Transverse colon (tissue), 4 donors: ENCODE measurements at regions of chr22 and their contacts with region 1.

Region 1: GRCh38 chr22:37198258-37199102 is 10.4 kb upstream of the C1QTNF6 start:
- DNase-seq: peak; percentile 94
- H3K4me3 ChIP-seq: peak overlapping the region; percentile 47 to 83 (median 62)
- H3K27ac ChIP-seq: peak overlapping the region; percentile 94 to 100 (median 96)
- H3K4me1 ChIP-seq: peaks cover 21 to 40% (median 37%) of the 10 kb centered on the region in 4 donors
- H3K27me3 ChIP-seq: no peaks in the 10 kb centered on the region
- CTCF ChIP-seq: peak; percentile 77 to 94 (median 90)
- EP300 ChIP-seq: no peak
- POLR2A ChIP-seq: no peak

Region 2: DNA sequence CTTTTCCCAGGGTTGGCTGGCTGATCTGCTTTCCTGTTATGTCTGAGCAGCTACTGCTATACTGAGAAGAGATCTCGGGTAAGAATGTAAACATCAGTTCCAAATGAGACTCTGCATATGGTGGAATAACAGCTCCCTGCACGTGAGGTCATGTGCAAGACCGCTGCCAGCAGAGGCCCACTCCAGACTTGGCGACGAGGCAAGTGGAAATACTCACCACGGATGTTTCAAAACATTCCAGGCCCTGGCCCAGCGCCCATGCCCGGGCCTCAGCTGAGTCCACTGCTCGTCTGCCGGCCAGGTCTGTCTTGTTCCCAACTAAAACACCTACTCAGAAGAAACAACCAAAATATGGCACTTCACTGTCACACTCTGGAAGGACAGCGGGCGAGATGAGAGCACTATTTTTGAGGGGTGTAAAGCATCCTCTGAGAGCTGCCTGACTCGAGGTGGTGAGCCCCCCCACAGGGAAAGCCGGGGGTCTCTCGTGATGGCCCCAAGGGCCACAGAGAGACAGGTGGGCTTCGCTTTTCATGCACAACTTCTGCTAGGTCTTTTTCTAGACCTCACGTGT is 435.7 kb before region 1 on chr22:
- in situ Hi-C with region 1: no loop called
- intact Hi-C with region 1: loop called (anchors 10 kb)
- DNase-seq: peak; percentile 53
- H3K4me3 ChIP-seq: no peak overlapping the region
- H3K27ac ChIP-seq: peak overlapping the region in 3 of 4 donors; percentile 23 to 66 (median 44)
- H3K4me1 ChIP-seq: peaks cover 0 to 8% (median 2%) of the 10 kb centered on the region in 4 donors
- H3K27me3 ChIP-seq: no peaks in the 10 kb centered on the region
- CTCF ChIP-seq: no peak
- EP300 ChIP-seq: no peak
- POLR2A ChIP-seq: no peak

Region 3: GRCh38 chr22:37077884-37078485 is 120.5 kb before region 1 on chr22:
- in situ Hi-C with region 1: loop called in 1 of 4 experiments (anchors 10 kb)
- intact Hi-C with region 1: no loop called
- DNase-seq: peak; percentile 75
- H3K4me3 ChIP-seq: no peak overlapping the region
- H3K27ac ChIP-seq: no peak overlapping the region
- H3K4me1 ChIP-seq: no peaks in the 10 kb centered on the region
- H3K27me3 ChIP-seq: peaks cover 14% of the 10 kb centered on the region
- CTCF ChIP-seq: peak; percentile 87 to 99 (median 94)
- EP300 ChIP-seq: no peak
- POLR2A ChIP-seq: no peak

Region 4: GRCh38 chr22:37166675-37167066 is 31.8 kb before region 1 on chr22:
- in situ Hi-C with region 1: no loop called
- intact Hi-C with region 1: loop called (anchors 1 kb)
- DNase-seq: peak; percentile 91
- H3K4me3 ChIP-seq: peak overlapping the region in 1 of 4 donors; percentile 6
- H3K27ac ChIP-seq: peak overlapping the region; percentile 67 to 79 (median 77)
- H3K4me1 ChIP-seq: peaks cover 14 to 25% (median 24%) of the 10 kb centered on the region in 4 donors
- H3K27me3 ChIP-seq: no peaks in the 10 kb centered on the region
- CTCF ChIP-seq: peak; percentile 92 to 97 (median 92)
- EP300 ChIP-seq: no peak
- POLR2A ChIP-seq: no peak

Region 5: DNA sequence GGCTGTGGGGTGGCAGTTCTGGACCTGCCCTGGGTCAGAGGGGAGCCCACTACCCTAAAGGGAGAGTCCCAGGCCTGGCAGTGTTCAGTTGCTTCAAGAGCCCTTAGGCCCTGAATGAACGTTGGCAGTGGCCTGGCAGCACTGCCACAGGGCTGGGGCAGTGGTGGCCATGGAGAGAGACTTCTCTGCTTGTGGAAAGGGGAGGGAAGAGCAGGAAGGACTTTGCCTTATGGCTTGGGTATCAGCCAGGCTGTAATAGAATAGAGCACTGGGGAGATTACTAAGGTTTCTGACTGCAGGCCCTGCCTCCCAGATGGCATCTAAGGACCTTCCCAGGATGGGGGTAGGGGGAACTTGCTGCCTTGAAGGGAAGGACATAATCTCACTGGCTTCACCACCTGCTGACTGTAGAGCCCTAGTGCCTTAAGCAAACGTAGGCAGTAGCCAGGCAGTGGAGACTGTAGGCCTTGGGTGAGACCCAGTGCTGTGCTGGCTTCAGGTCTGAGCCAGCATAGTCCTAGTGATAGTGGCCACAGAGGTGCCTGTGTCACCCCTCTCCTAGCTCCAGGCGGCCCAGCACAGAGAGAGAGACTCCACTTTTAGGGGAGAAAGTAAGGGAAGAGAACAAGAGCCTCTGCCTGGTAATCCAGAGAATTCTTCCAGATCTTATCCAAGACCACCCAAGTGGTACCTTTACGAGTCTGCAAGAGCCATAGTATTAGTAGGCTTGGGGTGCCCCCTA is 955.5 kb after region 1 on chr22:
- in situ Hi-C with region 1: no loop called
- intact Hi-C with region 1: loop called (anchors 5 kb)
- DNase-seq: peak; percentile 27
- H3K4me3 ChIP-seq: no peak overlapping the region
- H3K27ac ChIP-seq: peak overlapping the region in 1 of 4 donors; percentile 52
- H3K4me1 ChIP-seq: peaks cover 0 to 8% (median 1%) of the 10 kb centered on the region in 4 donors
- H3K27me3 ChIP-seq: no peaks in the 10 kb centered on the region
- CTCF ChIP-seq: no peak
- EP300 ChIP-seq: no peak
- POLR2A ChIP-seq: no peak